RWPE1 (cell line): ENCODE measurements at regions of chr16 and their contacts with region 1.

Region 1: GRCh38 chr16:70470927-70471341 is 16.5 kb downstream of the FCSK start:
- DNase-seq: no peak
- H3K27ac ChIP-seq: peak overlapping the region; percentile 58
- CTCF ChIP-seq: no peak; the same call in 1 of the 2 replicates

Region 2: DNA sequence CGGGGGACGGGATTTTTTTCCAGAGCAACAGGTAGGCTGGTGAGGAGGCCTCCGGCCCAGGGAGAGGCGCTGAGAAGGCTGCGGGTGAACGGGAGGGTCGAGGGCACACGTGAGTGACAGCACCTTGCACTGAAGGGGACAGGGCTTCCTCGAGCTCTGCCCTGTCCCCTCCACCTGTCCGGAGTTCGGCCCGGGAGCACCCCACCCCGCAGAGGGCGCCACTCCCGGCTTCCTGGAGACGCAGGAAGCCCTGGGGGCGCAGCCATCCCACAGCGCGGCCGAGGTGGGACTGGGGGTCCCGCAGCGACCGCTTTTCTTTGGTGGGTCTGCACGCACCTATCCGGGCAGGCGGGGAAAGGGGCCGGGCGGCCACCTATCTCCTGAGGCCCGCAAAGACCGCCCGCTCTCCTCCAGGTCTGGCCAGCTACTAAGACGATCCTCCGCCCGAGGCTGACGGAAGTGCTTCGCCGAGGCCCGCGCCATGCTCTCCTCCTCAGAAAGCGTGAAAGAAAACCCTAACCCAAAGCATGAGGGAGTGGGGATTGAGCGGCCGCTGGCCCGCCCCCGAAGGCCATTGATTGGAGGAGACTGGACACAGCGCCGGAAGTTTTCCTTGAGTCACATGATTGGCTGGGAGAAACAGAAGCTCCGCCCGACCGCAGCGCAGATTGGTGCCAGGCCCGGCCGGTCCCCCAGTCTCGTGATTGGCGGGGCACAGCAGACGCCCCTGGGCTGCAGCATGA is 89.9 kb before region 1 on chr16:
- CTCF ChIA-PET with region 1: interaction called, 10 read pairs
- POLR2A ChIA-PET with region 1: interaction called, 3 read pairs
- DNase-seq: peak; percentile 96
- H3K27ac ChIP-seq: peak overlapping the region; percentile 96
- CTCF ChIP-seq: peak; percentile 59

Region 3: DNA sequence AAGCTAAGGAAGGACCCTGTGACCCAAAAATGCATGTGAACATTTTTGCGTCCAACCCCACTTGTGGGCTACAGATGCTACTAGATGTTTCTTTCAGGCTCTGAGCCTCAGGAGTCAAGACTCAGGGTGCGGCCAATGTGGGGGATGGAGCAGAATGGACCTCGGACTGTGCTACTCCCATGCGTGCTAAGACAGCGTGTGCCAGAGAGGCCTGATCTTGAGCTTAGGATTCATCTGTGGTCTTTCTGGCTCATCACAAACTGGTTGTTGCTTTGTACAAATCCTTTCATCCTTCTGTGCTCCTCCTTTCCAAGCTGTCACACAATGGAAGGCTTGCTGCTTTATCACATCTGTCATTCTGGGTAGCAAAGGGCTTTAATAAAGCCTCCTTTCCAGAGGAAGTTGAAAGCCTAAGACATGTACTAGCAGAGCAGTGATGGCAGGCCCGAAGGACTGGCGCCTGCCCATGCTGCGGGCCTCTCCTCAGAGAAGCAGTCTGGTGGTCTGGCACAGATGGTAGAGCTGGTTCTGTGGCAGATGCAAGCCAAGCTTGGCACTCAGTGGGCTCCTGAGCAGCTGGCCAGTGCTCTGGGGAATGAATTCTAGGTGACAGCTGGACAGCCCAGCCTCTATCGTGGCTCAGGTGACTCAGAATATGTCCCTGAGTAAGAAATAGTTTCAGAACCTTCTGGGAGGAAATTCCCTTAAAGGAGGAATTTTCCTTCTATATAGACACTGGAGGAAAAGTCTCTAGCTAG is 24.7 kb after region 1 on chr16:
- CTCF ChIA-PET with region 1: interaction called, 3 read pairs
- POLR2A ChIA-PET with region 1: interaction called, 12 read pairs
- DNase-seq: no peak
- H3K27ac ChIP-seq: no peak overlapping the region
- CTCF ChIP-seq: no peak

Region 4: GRCh38 chr16:72270531-72270930 is 1799.6 kb after region 1 on chr16:
- CTCF ChIA-PET with region 1: no interaction called
- POLR2A ChIA-PET with region 1: no interaction called
- DNase-seq: no peak
- H3K27ac ChIP-seq: no peak overlapping the region
- CTCF ChIP-seq: no peak